ENCODE measurements at regions of chr1 and their contacts with region 1.

Region 1: GRCh38 chr1:89358287-89358893 is 5.5 kb upstream of the GBP6 start:
- DNase-seq: peak; percentile 60 to 81 (median 75)
- ATAC-seq: peak; percentile 96
- H3K4me3 ChIP-seq: no peak overlapping the region
- H3K4me3 Mint-ChIP-seq: peak overlapping the region in 8 of 10 donors; percentile 1 to 82 (median 12)
- H3K27ac ChIP-seq: no peak overlapping the region
- H3K27ac Mint-ChIP-seq: peak overlapping the region in 6 of 9 donors; percentile 3 to 88 (median 46)
- H3K4me1 ChIP-seq: peaks cover 0 to 16% of the 10 kb centered on the region in 2 donors
- H3K4me1 Mint-ChIP-seq: peaks cover 5 to 61% (median 26%) of the 10 kb centered on the region in 7 donors
- H3K27me3 ChIP-seq: no peaks in the 10 kb centered on the region
- H3K27me3 Mint-ChIP-seq: peaks cover 0 to 8% (median 0%) of the 10 kb centered on the region in 5 donors

Region 2: GRCh38 chr1:88357729-88358128 is 1000.7 kb before region 1 on chr1:
- CTCF ChIA-PET with region 1: no interaction called
- POLR2A ChIA-PET with region 1: no interaction called
- intact Hi-C with region 1: no loop called
- DNase-seq: no peak
- ATAC-seq: no peak
- H3K4me3 ChIP-seq: no peak overlapping the region
- H3K4me3 Mint-ChIP-seq: no peak overlapping the region
- H3K27ac ChIP-seq: no peak overlapping the region
- H3K27ac Mint-ChIP-seq: no peak overlapping the region
- H3K4me1 ChIP-seq: no peaks in the 10 kb centered on the region
- H3K4me1 Mint-ChIP-seq: no peaks in the 10 kb centered on the region
- H3K27me3 ChIP-seq: no peaks in the 10 kb centered on the region
- H3K27me3 Mint-ChIP-seq: peaks cover 0 to 4% (median 0%) of the 10 kb centered on the region in 5 donors

Region 3: GRCh38 chr1:88973520-88974137 is 384.8 kb before region 1 on chr1:
- CTCF ChIA-PET with region 1: interaction called, 3 read pairs
- POLR2A ChIA-PET with region 1: no interaction called
- intact Hi-C with region 1: loop called in 1 of 2 experiments (anchors 2 kb)
- DNase-seq: peak in 3 of 9 donors; percentile 11 to 34 (median 18)
- ATAC-seq: peak; percentile 47
- H3K4me3 ChIP-seq: no peak overlapping the region
- H3K4me3 Mint-ChIP-seq: no peak overlapping the region
- H3K27ac ChIP-seq: no peak overlapping the region
- H3K27ac Mint-ChIP-seq: peak overlapping the region in 1 of 9 donors; percentile 33
- H3K4me1 ChIP-seq: peaks cover 0 to 5% of the 10 kb centered on the region in 2 donors
- H3K4me1 Mint-ChIP-seq: peaks cover 15 to 39% (median 24%) of the 10 kb centered on the region in 7 donors
- H3K27me3 ChIP-seq: no peaks in the 10 kb centered on the region
- H3K27me3 Mint-ChIP-seq: no peaks in the 10 kb centered on the region

Region 4: DNA sequence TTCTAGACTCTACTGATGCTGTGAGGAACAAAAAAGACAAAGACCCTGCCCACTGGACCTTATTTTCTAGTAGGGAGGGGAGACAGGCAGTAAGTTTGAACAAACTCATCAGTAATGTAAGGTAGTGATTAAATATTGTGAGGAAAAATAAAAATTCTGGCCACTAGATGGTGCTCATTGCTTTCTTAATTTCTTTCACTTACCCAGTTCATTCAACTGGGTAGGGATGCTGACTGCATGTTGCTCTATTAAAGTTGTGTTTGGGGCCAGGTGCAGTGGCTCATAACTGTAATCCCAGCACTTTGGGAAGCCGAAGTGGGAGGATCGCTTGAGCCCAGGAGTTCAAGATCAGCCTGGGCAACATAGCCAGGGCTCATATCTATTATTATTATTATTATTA is 359.7 kb before region 1 on chr1:
- CTCF ChIA-PET with region 1: interaction called, 16 read pairs
- POLR2A ChIA-PET with region 1: interaction called, 5 read pairs
- intact Hi-C with region 1: loop called (anchors 1 kb)
- DNase-seq: peak in 7 of 9 donors; percentile 59 to 81 (median 76)
- ATAC-seq: peak; percentile 90
- H3K4me3 ChIP-seq: no peak overlapping the region
- H3K4me3 Mint-ChIP-seq: no peak overlapping the region
- H3K27ac ChIP-seq: no peak overlapping the region
- H3K27ac Mint-ChIP-seq: peak overlapping the region in 1 of 9 donors; percentile 68
- H3K4me1 ChIP-seq: peaks cover 12 to 19% of the 10 kb centered on the region in 2 donors
- H3K4me1 Mint-ChIP-seq: peaks cover 17 to 49% (median 34%) of the 10 kb centered on the region in 7 donors
- H3K27me3 ChIP-seq: no peaks in the 10 kb centered on the region
- H3K27me3 Mint-ChIP-seq: peaks cover 0 to 2% (median 0%) of the 10 kb centered on the region in 5 donors

Region 5: GRCh38 chr1:89125913-89126580 is 232.3 kb before region 1 on chr1 and contains the start of gene GBP2:
- CTCF ChIA-PET with region 1: interaction called, 4 read pairs
- POLR2A ChIA-PET with region 1: interaction called, 4 read pairs
- intact Hi-C with region 1: loop called (anchors 1 to 2 kb)
- DNase-seq: peak in 7 of 9 donors; percentile 35 to 72 (median 42)
- ATAC-seq: peak; percentile 82
- H3K4me3 ChIP-seq: peak within 1 kb of the TSS; percentile 84
- H3K4me3 Mint-ChIP-seq: peak within 1 kb of the TSS; percentile 88 to 100 (median 98)
- H3K27ac ChIP-seq: peak within 1 kb of the TSS; percentile 76
- H3K27ac Mint-ChIP-seq: peak within 1 kb of the TSS; percentile 94 to 100 (median 99)
- H3K4me1 ChIP-seq: peaks cover 30 to 32% of the 10 kb centered on the region in 2 donors
- H3K4me1 Mint-ChIP-seq: peaks cover 39 to 75% (median 63%) of the 10 kb centered on the region in 7 donors
- H3K27me3 ChIP-seq: no peaks in the 10 kb centered on the region
- H3K27me3 Mint-ChIP-seq: peaks cover 0 to 2% (median 0%) of the 10 kb centered on the region in 5 donors
- total RNA-seq, gene GBP2: 74.0 to 200 (median 185) TPM

Region 6: DNA sequence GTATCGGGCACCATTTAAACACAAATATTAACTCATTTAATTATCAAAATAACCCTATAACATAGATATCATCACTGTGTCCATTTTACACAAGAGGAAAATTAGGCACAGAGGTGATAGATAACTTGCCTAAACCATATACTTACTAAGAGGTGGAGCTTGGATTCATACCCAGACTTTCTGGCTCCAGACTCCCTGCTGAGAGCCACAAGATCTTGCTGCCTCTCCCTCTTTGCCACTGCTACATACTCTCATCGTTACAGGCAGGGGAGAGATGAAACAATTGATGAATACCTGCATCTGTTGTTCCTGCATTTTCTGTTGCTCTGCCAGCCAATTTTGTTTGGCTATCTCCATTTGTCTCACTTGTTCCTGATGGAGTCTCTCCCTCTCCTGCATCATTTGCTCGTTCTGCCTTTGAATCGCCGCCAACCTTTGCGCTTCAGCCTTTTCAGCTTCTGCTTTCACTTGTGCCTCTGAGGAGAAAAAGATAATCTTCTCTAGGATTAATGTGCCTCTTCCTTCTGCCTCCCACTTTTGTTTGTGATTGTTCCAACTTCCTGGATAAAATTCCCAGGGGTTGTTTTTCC is 96.4 kb before region 1 on chr1:
- CTCF ChIA-PET with region 1: interaction called, 3 read pairs
- POLR2A ChIA-PET with region 1: interaction called, 4 read pairs
- intact Hi-C with region 1: loop called in 1 of 2 experiments (anchors 1 kb)
- DNase-seq: no peak
- ATAC-seq: no peak
- H3K4me3 ChIP-seq: peak overlapping the region; percentile 14
- H3K4me3 Mint-ChIP-seq: peak overlapping the region in 5 of 10 donors; percentile 12 to 91 (median 58)
- H3K27ac ChIP-seq: no peak overlapping the region
- H3K27ac Mint-ChIP-seq: peak overlapping the region in 8 of 9 donors; percentile 22 to 93 (median 56)
- H3K4me1 ChIP-seq: peaks cover 39 to 75% of the 10 kb centered on the region in 2 donors
- H3K4me1 Mint-ChIP-seq: peaks cover 49 to 76% (median 68%) of the 10 kb centered on the region in 7 donors
- H3K27me3 ChIP-seq: no peaks in the 10 kb centered on the region
- H3K27me3 Mint-ChIP-seq: no peaks in the 10 kb centered on the region

Region 7: DNA sequence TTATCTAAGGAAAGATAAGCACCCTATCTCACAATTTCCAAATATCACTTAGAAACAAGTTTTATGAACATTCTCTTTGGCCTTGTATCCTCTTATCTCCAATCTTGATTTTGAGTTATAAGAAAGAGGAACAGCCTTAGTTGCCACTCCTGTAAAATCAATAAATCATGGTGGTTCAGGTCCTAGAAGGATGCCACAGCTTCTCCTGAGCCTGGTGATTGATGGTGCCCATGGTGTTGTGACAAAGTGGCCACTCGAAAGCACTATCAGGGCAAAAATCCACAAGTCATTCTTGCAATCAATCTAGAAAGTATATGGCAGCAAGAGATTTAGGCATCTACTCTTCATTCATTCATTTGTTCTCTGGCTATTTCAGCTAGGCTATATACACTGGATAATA is 33.3 kb after region 1 on chr1:
- CTCF ChIA-PET with region 1: no interaction called
- POLR2A ChIA-PET with region 1: no interaction called
- intact Hi-C with region 1: no loop called
- DNase-seq: no peak
- ATAC-seq: no peak
- H3K4me3 ChIP-seq: no peak overlapping the region
- H3K4me3 Mint-ChIP-seq: no peak overlapping the region
- H3K27ac ChIP-seq: no peak overlapping the region
- H3K27ac Mint-ChIP-seq: no peak overlapping the region
- H3K4me1 ChIP-seq: no peaks in the 10 kb centered on the region
- H3K4me1 Mint-ChIP-seq: no peaks in the 10 kb centered on the region
- H3K27me3 ChIP-seq: no peaks in the 10 kb centered on the region
- H3K27me3 Mint-ChIP-seq: no peaks in the 10 kb centered on the region